Caco-2 (cell line): ENCODE measurements at regions of chr7 and their contacts with region 1.

Region 1: DNA sequence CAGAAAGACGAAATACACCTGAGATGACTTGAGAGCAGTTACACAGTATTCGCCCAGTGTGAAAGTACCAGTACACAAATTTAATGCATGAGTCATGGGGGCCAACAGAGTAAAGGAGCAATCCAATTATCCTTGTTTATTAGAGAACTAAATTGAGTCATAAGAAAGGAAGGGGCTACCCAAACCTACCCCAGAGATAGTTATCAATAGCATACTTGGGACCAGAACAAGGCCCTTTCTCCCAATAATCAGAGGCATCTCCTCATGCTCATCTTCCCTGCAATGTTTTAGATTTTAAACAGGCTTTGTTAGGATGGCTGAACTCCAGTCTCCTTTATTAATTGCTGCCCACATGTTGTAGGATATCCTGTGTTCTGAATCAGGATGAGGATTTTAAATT is 239.7 kb upstream of the LRGUK start:
- DNase-seq: no peak
- H3K4me3 ChIP-seq: no peak overlapping the region
- H3K4me3 Mint-ChIP-seq: no peak overlapping the region
- H3K27ac Mint-ChIP-seq: peak overlapping the region; percentile 1
- H3K4me1 ChIP-seq: peaks cover 53% of the 10 kb centered on the region
- H3K4me1 Mint-ChIP-seq: peaks cover 31% of the 10 kb centered on the region
- H3K27me3 ChIP-seq: no peaks in the 10 kb centered on the region
- H3K27me3 Mint-ChIP-seq: no peaks in the 10 kb centered on the region
- CTCF ChIP-seq: no peak

Region 2: DNA sequence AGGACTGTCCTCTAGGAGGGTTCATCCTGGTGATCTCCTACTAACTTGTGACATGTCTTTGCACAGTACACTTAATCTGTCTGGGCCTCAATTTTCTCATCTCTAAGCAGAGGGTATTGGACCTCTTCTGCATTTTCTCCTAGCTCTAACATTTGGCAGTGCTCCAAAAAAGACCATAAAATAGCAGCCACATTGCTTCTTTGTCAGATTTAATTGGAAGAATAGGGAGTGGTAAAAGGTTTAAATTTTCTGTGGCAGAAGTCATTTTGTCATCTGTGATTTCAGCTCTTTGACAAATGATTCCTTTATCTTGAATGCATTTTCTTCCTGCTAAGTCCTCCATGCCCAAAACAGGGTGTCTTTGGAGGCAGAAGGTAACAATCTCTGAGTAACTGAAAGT is 50.2 kb before region 1 on chr7:
- CTCF ChIA-PET with region 1: no interaction called
- POLR2A ChIA-PET with region 1: no interaction called
- intact Hi-C with region 1: loop called (anchors 1 kb)
- DNase-seq: no peak
- H3K4me3 ChIP-seq: no peak overlapping the region
- H3K4me3 Mint-ChIP-seq: no peak overlapping the region
- H3K27ac Mint-ChIP-seq: no peak overlapping the region
- H3K4me1 ChIP-seq: peaks cover 16% of the 10 kb centered on the region
- H3K4me1 Mint-ChIP-seq: peaks cover 7% of the 10 kb centered on the region
- H3K27me3 ChIP-seq: no peaks in the 10 kb centered on the region
- H3K27me3 Mint-ChIP-seq: no peaks in the 10 kb centered on the region
- CTCF ChIP-seq: no peak

Region 3: GRCh38 chr7:133863362-133864061 is 23.9 kb before region 1 on chr7:
- CTCF ChIA-PET with region 1: no interaction called
- POLR2A ChIA-PET with region 1: interaction called, 3 read pairs
- intact Hi-C with region 1: loop called (anchors 1 kb)
- DNase-seq: peak in 1 of 2 experiments; percentile 38
- H3K4me3 ChIP-seq: no peak overlapping the region
- H3K4me3 Mint-ChIP-seq: no peak overlapping the region
- H3K27ac Mint-ChIP-seq: no peak overlapping the region
- H3K4me1 ChIP-seq: peaks cover 12% of the 10 kb centered on the region
- H3K4me1 Mint-ChIP-seq: no peaks in the 10 kb centered on the region
- H3K27me3 ChIP-seq: no peaks in the 10 kb centered on the region
- H3K27me3 Mint-ChIP-seq: no peaks in the 10 kb centered on the region
- CTCF ChIP-seq: no peak